ENCODE measurements at regions of chr1 and their contacts with region 1.

Region 1: GRCh38 chr1:201877877-201878401 is 10.8 kb upstream of the SHISA4 start:
- DNase-seq: peak; percentile 46
- H3K4me3 ChIP-seq: peak overlapping the region in 1 of 2 experiments; percentile 24; a peak in 1 of 4 replicates
- H3K27ac ChIP-seq: no peak overlapping the region
- H3K4me1 ChIP-seq: peaks cover 3 to 8% of the 10 kb centered on the region in 2 experiments; a peak in 3 of 4 replicates
- H3K27me3 ChIP-seq: no peaks in the 10 kb centered on the region
- CTCF ChIP-seq: peak; percentile 73
- EP300 ChIP-seq: no peak
- RAD21 ChIP-seq: peak; percentile 67

Region 2: DNA sequence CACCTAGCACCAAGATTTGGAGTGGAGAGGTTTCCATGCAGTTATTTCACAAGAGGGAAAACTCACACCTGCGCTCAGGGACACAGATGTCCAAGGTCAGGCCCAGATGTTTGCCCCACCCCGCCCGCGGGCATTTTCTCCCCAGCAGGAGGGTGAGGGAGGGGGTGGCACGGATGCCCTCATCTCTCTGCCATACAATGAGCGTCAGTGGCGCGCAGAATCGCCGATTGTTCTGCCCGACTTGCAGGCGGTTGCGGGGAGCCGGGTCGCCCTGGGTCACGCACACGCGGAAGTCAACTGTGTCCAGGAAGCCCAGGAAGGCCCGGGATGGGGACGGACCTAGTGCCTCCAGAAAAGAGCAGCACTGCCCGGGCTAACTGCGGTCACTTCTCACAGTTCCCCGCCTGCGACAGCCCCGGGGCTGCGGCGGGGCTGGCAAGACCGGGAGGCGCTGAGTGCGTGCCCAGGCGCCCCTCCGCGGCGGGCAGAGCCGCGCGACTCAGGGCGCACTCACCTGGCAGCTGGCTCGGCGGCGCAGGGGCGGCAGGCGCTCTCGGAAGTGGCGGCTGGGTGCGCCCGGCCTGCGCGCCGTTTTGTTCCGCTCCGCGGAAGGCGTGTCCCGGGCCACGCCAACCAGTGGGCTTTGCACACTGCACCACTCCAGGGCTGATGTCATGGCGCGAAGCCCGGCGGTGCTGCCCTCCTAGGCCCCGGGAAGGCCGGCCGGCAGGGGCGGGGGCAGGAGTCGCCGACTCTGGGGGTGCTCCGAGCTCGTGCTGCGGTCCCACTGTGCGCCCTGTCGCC is 371.2 kb before region 1 on chr1 and contains the start of gene CSRP1:
- CTCF ChIA-PET with region 1: no interaction called
- POLR2A ChIA-PET with region 1: no interaction called
- DNase-seq: peak; percentile 96
- H3K4me3 ChIP-seq: peak within 1 kb of the TSS; percentile 57 to 65
- H3K27ac ChIP-seq: peak within 1 kb of the TSS; percentile 50 to 93
- H3K4me1 ChIP-seq: peaks cover 24 to 33% of the 10 kb centered on the region in 2 experiments; a peak in 3 of 4 replicates
- H3K27me3 ChIP-seq: no peaks in the 10 kb centered on the region
- CTCF ChIP-seq: no peak
- EP300 ChIP-seq: no peak
- RAD21 ChIP-seq: no peak
- polyA plus RNA-seq, gene CSRP1: 317 and 373 TPM in 2 replicates

Region 3: DNA sequence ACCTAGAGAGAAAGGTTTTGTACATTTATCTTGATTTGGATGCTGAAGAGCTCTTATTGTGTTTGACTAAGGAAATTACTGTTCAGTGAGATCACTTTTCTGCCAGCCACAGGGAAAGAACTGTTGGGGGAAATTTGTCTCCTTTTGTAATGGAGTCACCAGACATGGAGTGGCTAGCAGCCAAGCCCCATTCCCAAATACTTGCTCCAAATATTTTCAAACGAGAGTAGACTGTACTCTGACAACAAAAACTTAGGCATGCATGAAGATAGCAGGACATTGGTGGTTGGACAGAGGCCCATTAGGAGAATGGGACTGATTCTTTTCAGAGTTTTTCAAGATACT is 27.9 kb before region 1 on chr1:
- CTCF ChIA-PET with region 1: interaction called, 12 read pairs
- POLR2A ChIA-PET with region 1: no interaction called
- DNase-seq: no peak
- H3K4me3 ChIP-seq: peak overlapping the region in 1 of 2 experiments; percentile 27; a peak in 1 of 4 replicates
- H3K27ac ChIP-seq: peak overlapping the region; percentile 74 to 86; a peak in 3 of 4 replicates
- H3K4me1 ChIP-seq: peaks cover 5 to 25% of the 10 kb centered on the region in 2 experiments
- H3K27me3 ChIP-seq: no peaks in the 10 kb centered on the region
- CTCF ChIP-seq: no peak
- EP300 ChIP-seq: peak in 1 of 2 experiments; percentile 66; a peak in 2 of 4 replicates
- RAD21 ChIP-seq: no peak

Region 4: GRCh38 chr1:202085682-202086404 is 207.9 kb after region 1 on chr1:
- CTCF ChIA-PET with region 1: no interaction called
- POLR2A ChIA-PET with region 1: no interaction called
- DNase-seq: no peak
- H3K4me3 ChIP-seq: no peak overlapping the region
- H3K27ac ChIP-seq: no peak overlapping the region
- H3K4me1 ChIP-seq: peaks cover 0 to 5% of the 10 kb centered on the region in 2 experiments; a peak in 1 of 4 replicates
- H3K27me3 ChIP-seq: no peaks in the 10 kb centered on the region; the same call in 1 of the 2 replicates
- CTCF ChIP-seq: no peak
- EP300 ChIP-seq: no peak
- RAD21 ChIP-seq: no peak

Measured in SK-N-SH (cell line).